Activated CD8-positive, alpha-beta T cell treated with anti-CD3 and anti-CD28 coated beads, Interleukin-2, amount 10 ng/mL, durations not matched to agents 7 days and 5 days (primary cell): ENCODE measurements at regions of chr7 and their contacts with region 1.

Region 1: DNA sequence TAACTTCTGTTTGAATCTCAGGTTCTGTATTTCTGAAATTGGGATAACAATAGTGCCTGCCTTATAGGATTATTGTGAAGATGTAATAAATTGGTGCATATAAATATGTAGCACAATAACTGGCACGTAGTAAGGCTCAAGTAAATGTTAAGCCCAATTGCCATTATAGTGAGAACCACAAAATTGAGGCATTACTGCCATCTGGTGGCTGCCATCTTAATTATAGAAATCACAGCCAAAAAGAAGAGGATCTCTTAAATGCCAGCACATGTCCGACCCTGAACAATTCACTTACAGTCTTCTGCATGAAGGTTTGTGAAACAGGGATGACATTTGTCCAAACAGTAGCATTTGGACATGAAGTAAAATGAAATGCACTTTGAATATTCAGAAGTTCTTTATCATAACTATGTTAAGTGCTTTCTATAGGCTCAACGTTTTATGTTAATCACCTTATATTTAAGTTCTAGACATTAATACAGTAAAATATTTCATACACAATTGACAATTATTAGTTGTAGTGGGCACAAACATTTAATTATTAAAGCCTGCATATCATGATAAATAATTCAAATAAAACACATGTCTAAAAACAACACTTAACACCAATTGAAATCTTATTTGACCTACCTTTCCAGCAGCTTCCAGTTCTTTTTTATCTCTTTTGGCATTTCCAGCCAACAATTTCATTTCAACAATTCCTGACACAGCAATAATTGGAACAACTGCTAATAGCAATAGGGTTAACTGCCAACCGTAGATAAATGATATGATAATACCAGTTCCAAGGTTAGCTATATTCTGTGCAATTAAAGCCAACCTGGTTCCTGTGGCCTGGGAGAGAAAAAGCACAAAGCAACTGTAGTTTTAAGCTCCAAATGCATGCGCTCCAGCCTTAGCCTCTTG is 58.5 kb downstream of the ABCB4 start:
- DNase-seq: peak; percentile 79
- ATAC-seq: peak; percentile 63
- H3K4me3 Mint-ChIP-seq: no peak overlapping the region
- H3K27ac Mint-ChIP-seq: no peak overlapping the region
- H3K4me1 Mint-ChIP-seq: no peaks in the 10 kb centered on the region
- H3K27me3 Mint-ChIP-seq: peaks cover 3% of the 10 kb centered on the region

Region 2: DNA sequence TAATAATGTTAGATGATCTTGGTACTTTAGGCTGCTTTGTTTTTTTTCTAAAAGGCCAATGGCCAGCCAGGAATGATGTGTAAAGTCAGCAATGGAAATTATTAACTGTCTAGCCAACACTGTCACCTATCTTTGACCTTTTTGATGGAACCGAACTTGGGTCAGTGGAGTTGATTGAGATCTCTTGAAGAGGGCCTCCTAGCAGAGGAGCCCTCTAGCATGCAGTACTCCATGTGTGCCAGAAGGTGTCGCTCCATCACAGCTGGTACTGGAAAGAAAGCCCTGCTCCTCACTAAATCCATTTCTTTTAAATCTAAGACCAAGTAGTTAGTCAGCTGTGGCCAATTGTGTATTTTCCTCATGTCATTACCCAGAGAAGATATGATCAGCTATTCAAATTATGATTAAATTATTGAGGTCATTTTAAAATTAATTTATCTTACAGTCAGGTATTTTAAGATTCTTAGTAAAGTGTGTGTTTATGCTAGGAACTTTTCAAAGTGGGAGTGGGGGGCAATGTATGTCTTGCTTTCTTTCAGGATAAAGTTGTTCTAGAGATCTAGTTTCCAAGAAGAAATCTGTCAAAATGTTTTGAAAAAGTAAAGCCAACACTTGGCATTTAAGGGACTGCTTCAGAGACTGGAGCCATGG is 104.6 kb before region 1 on chr7:
- CTCF ChIA-PET with region 1: interaction called, 70 read pairs
- POLR2A ChIA-PET with region 1: interaction called, 3 read pairs
- DNase-seq: peak; percentile 71
- ATAC-seq: peak; percentile 73
- H3K4me3 Mint-ChIP-seq: no peak overlapping the region
- H3K27ac Mint-ChIP-seq: no peak overlapping the region
- H3K4me1 Mint-ChIP-seq: no peaks in the 10 kb centered on the region
- H3K27me3 Mint-ChIP-seq: peaks cover 12% of the 10 kb centered on the region

Region 3: DNA sequence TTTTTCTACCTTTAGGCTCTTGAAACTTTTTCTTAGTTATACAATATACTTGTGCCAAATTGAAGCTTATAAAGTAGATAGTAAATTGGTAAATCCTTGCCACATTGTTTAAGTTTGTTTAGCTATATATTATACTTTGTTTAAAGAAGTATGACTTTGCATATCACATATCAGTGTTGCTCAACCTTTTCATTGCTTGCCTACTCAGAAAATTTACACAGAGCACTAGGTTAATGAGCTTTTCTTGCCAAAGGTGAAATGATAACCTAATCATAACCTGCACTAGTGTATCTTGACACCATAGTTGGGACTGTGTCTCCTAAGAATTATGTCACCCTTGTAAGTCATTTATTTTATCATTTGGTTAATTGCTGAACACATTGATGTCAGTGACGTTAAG is 40.9 kb before region 1 on chr7:
- CTCF ChIA-PET with region 1: interaction called, 10 read pairs
- POLR2A ChIA-PET with region 1: no interaction called
- DNase-seq: no peak
- ATAC-seq: no peak
- H3K4me3 Mint-ChIP-seq: no peak overlapping the region
- H3K27ac Mint-ChIP-seq: no peak overlapping the region
- H3K4me1 Mint-ChIP-seq: no peaks in the 10 kb centered on the region
- H3K27me3 Mint-ChIP-seq: no peaks in the 10 kb centered on the region

Region 4: DNA sequence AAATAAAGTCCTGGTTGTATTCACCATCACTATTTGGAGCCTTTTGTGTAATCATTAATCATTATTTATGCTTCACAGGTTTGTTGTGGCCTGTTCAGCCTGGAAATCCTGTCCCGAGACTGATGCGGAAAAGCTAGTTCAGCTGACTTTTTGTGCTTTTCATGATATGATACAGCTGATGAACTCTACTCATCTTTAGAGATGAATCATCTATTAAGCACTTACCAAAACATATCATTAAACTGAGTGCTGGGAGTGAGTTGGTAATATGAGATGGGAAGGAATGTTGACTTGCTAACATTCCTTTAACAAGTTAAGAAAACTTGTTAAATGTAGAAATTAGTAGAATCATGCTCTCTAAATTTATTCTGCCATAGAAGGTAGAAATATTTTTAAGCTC is 18.5 kb before region 1 on chr7:
- CTCF ChIA-PET with region 1: interaction called, 32 read pairs
- POLR2A ChIA-PET with region 1: no interaction called
- DNase-seq: no peak
- ATAC-seq: no peak
- H3K4me3 Mint-ChIP-seq: no peak overlapping the region
- H3K27ac Mint-ChIP-seq: no peak overlapping the region
- H3K4me1 Mint-ChIP-seq: no peaks in the 10 kb centered on the region
- H3K27me3 Mint-ChIP-seq: no peaks in the 10 kb centered on the region

Region 5: DNA sequence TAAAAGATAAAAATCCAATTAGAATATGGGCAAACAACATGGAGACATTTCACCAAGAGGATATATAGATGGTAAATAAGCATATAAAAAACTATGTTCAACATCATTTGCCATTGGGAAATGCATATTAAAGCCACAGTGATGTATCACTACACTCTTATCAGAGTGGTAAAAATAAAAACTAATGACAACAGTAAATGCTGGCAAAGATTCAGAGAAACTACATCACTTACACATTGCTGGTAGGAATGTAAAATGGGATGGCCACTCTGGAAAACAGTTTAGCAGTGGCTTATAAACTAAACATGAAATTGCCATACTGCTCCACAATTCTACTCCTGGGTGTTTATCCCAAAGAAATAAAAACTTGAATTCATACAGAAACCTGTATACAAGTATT is 12.3 kb before region 1 on chr7:
- CTCF ChIA-PET with region 1: interaction called, 32 read pairs
- POLR2A ChIA-PET with region 1: no interaction called
- DNase-seq: no peak
- ATAC-seq: no peak
- H3K4me3 Mint-ChIP-seq: no peak overlapping the region
- H3K27ac Mint-ChIP-seq: no peak overlapping the region
- H3K4me1 Mint-ChIP-seq: no peaks in the 10 kb centered on the region
- H3K27me3 Mint-ChIP-seq: peaks cover 10% of the 10 kb centered on the region